ENCODE measurements at regions of chr16 and their contacts with region 1.

Region 1: GRCh38 chr16:31032736-31033708 is at the start of gene STX4:
- DNase-seq: peak; percentile 97 to 100
- ATAC-seq: peak; percentile 78 to 89 (median 82)
- H3K4me3 ChIP-seq: peak within 1 kb of the TSS; percentile 80
- H3K4me3 Mint-ChIP-seq: peak within 1 kb of the TSS; percentile 99
- H3K27ac ChIP-seq: peak within 1 kb of the TSS; percentile 92
- H3K27ac Mint-ChIP-seq: peak within 1 kb of the TSS; percentile 95 to 99
- H3K4me1 ChIP-seq: peaks cover 20% of the 10 kb centered on the region
- H3K4me1 Mint-ChIP-seq: peaks cover 36 to 37% of the 10 kb centered on the region in 2 donors
- H3K27me3 ChIP-seq: no peaks in the 10 kb centered on the region
- H3K27me3 Mint-ChIP-seq: no peaks in the 10 kb centered on the region
- CTCF ChIP-seq: no peak
- total RNA-seq, gene STX4: 128 to 145 (median 133) TPM

Region 2: GRCh38 chr16:31073968-31074813 is 41.2 kb after region 1 on chr16 and contains the starts of genes ZNF646 and ZNF668:
- intact Hi-C with region 1: loop called (anchors 1 kb)
- DNase-seq: peak; percentile 93 to 100
- ATAC-seq: peak; percentile 85 to 93 (median 85)
- H3K4me3 ChIP-seq: peak within 1 kb of the TSS; percentile 92
- H3K4me3 Mint-ChIP-seq: peak within 1 kb of the TSS; percentile 97
- H3K27ac ChIP-seq: peak within 1 kb of the TSS; percentile 89
- H3K27ac Mint-ChIP-seq: peak within 1 kb of the TSS; percentile 95 to 97
- H3K4me1 ChIP-seq: peaks cover 29% of the 10 kb centered on the region
- H3K4me1 Mint-ChIP-seq: peaks cover 45 to 51% of the 10 kb centered on the region in 2 donors
- H3K27me3 ChIP-seq: no peaks in the 10 kb centered on the region
- H3K27me3 Mint-ChIP-seq: no peaks in the 10 kb centered on the region
- CTCF ChIP-seq: no peak
- total RNA-seq, gene ZNF646: 22.0 to 31.1 (median 30.1) TPM
- total RNA-seq, gene ZNF668: 11.0 to 27.4 (median 22.6) TPM

Region 3: GRCh38 chr16:31094424-31095120 is 61.5 kb after region 1 on chr16 and contains the start of gene VKORC1:
- intact Hi-C with region 1: loop called (anchors 5 kb)
- DNase-seq: peak; percentile 69 to 93
- ATAC-seq: peak; percentile 78 to 89 (median 82)
- H3K4me3 ChIP-seq: peak within 1 kb of the TSS; percentile 87
- H3K4me3 Mint-ChIP-seq: peak within 1 kb of the TSS; percentile 87
- H3K27ac ChIP-seq: peak within 1 kb of the TSS; percentile 67
- H3K27ac Mint-ChIP-seq: peak within 1 kb of the TSS; percentile 84 to 90
- H3K4me1 ChIP-seq: peaks cover 26% of the 10 kb centered on the region
- H3K4me1 Mint-ChIP-seq: peaks cover 22 to 24% of the 10 kb centered on the region in 2 donors
- H3K27me3 ChIP-seq: no peaks in the 10 kb centered on the region
- H3K27me3 Mint-ChIP-seq: no peaks in the 10 kb centered on the region
- CTCF ChIP-seq: no peak
- total RNA-seq, gene VKORC1: 35.9 to 42.1 (median 41.8) TPM

Region 4: GRCh38 chr16:31458844-31459721 is 426.1 kb after region 1 on chr16 and contains the start of gene ARMC5:
- intact Hi-C with region 1: loop called (anchors 1 kb)
- DNase-seq: peak; percentile 92 to 99
- ATAC-seq: peak; percentile 68 to 84 (median 70)
- H3K4me3 ChIP-seq: peak within 1 kb of the TSS; percentile 85
- H3K4me3 Mint-ChIP-seq: peak within 1 kb of the TSS; percentile 94
- H3K27ac ChIP-seq: peak within 1 kb of the TSS; percentile 97
- H3K27ac Mint-ChIP-seq: peak within 1 kb of the TSS; percentile 94 to 97
- H3K4me1 ChIP-seq: peaks cover 60% of the 10 kb centered on the region
- H3K4me1 Mint-ChIP-seq: peaks cover 26 to 37% of the 10 kb centered on the region in 2 donors
- H3K27me3 ChIP-seq: no peaks in the 10 kb centered on the region
- H3K27me3 Mint-ChIP-seq: no peaks in the 10 kb centered on the region
- CTCF ChIP-seq: peak; percentile 58
- total RNA-seq, gene ARMC5: 10.4 to 22.8 (median 16.6) TPM